Endothelial cell of umbilical vein (primary cell): ENCODE measurements at regions of chr1 and their contacts with region 1.

Region 1: DNA sequence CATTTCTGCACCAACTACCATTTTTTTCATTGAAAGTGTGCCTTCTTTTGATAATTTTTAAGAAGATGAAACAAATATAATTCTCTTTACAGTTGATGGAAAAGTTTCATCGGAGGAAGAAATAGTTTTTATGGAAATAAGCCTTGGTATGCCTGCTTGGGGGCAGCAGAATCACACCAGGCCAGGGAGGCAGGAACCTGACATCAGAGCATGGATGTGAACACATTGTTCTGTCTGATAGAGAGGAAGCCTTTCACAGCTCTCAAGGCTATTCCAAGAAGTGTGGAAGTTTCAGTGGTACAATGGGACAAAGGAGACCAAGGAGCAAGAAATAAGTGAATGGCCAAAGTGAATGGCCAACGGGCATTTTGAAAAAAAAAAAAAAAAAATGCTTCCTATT is 162.2 kb upstream of the KCNK2 start:
- DNase-seq: peak; percentile 6
- H3K4me3 ChIP-seq: no peak overlapping the region
- H3K27ac ChIP-seq: no peak overlapping the region
- H3K4me1 ChIP-seq: no peaks in the 10 kb centered on the region
- H3K27me3 ChIP-seq: no peaks in the 10 kb centered on the region
- CTCF ChIP-seq: no peak
- POLR2A ChIP-seq: no peak

Region 2: DNA sequence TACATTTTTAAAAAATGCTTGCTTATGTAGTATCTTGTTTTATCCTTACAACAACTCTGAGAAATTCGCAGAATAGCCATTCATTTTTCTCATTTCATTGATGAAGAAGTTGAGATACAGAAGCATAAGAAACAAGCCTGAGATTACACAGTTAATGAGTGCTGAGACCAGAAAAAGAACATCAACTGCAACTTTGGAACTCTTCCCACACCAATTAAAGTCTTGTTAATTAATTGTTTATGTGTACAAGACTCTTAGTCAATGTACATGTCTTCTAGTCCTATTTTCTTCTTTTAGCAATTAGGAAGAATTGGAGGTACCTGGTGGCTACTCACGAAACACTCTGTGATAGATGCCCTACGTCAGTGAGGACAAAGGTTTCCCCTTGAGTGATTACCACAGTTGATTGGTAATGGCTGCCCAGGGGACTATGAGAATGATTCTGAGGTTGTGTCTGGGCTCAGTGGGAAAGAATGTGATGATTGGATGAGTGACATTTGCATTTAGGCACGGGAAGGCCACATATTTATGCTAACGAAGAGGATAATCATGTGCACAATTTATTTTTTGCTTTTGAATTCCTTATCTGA is 25.2 kb before region 1 on chr1:
- CTCF ChIA-PET with region 1: no interaction called
- POLR2A ChIA-PET with region 1: no interaction called
- dilution Hi-C with region 1: no loop called
- intact Hi-C with region 1: no loop called
- DNase-seq: no peak
- H3K4me3 ChIP-seq: no peak overlapping the region
- H3K27ac ChIP-seq: no peak overlapping the region
- H3K4me1 ChIP-seq: peaks cover 3% of the 10 kb centered on the region
- H3K27me3 ChIP-seq: no peaks in the 10 kb centered on the region
- CTCF ChIP-seq: no peak
- POLR2A ChIP-seq: no peak

Region 3: GRCh38 chr1:214933375-214933774 is 13.0 kb after region 1 on chr1:
- CTCF ChIA-PET with region 1: interaction called, 13 read pairs
- POLR2A ChIA-PET with region 1: no interaction called
- dilution Hi-C with region 1: no loop called
- intact Hi-C with region 1: no loop called
- DNase-seq: no peak
- H3K4me3 ChIP-seq: no peak overlapping the region
- H3K27ac ChIP-seq: no peak overlapping the region
- H3K4me1 ChIP-seq: peaks cover 6% of the 10 kb centered on the region
- H3K27me3 ChIP-seq: no peaks in the 10 kb centered on the region
- CTCF ChIP-seq: no peak
- POLR2A ChIP-seq: no peak

Region 4: GRCh38 chr1:214967865-214968575 is 47.7 kb after region 1 on chr1:
- CTCF ChIA-PET with region 1: no interaction called
- POLR2A ChIA-PET with region 1: no interaction called
- dilution Hi-C with region 1: no loop called
- intact Hi-C with region 1: no loop called
- DNase-seq: no peak
- H3K4me3 ChIP-seq: no peak overlapping the region
- H3K27ac ChIP-seq: no peak overlapping the region
- H3K4me1 ChIP-seq: no peaks in the 10 kb centered on the region
- H3K27me3 ChIP-seq: peaks cover 0 to 3% of the 10 kb centered on the region in 2 experiments
- CTCF ChIP-seq: no peak
- POLR2A ChIP-seq: no peak